ENCODE measurements at regions of chr9 and their contacts with region 1.

Region 1: DNA sequence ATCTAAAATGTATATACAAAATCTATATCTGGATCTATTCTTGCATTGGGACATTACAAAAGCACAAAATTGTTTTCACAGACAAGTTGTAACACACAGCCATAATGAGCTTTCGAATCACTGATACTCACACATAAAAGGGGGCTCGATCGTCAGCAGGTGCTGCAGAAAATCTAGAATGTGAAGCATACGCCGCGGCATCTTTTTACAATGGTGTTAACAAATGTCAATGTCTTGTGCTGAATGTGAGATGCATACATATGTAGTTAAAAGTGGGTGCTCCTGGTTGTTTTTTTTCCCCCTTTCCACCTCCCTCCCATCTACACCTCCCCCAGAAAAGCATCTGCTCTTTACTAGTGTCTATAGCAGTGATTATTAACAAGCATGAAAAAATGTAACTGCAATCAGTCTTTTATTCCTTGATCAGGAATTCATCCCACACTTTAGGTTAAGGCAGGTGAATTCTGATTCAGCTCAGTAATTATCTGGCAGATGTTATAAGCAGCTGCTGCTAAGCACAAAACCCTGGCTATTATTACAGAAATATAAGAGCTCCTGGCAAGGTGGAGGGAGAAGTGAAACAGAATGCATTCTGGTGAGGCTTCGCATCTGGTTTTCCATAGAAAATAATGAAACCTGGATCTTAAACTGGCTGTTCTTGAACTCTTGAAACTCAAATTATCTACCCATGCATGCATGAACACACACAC is 114.1 kb downstream of the MPDZ start:
- DNase-seq: no peak
- H3K4me3 Mint-ChIP-seq: no peak overlapping the region
- H3K27ac Mint-ChIP-seq: no peak overlapping the region
- H3K4me1 Mint-ChIP-seq: no peaks in the 10 kb centered on the region
- H3K27me3 Mint-ChIP-seq: no peaks in the 10 kb centered on the region

Region 2: GRCh38 chr9:13110766-13111417 is 54.5 kb before region 1 on chr9:
- CTCF ChIA-PET with region 1: no interaction called
- intact Hi-C with region 1: no loop called
- DNase-seq: no peak
- H3K4me3 Mint-ChIP-seq: no peak overlapping the region
- H3K27ac Mint-ChIP-seq: no peak overlapping the region
- H3K4me1 Mint-ChIP-seq: no peaks in the 10 kb centered on the region
- H3K27me3 Mint-ChIP-seq: no peaks in the 10 kb centered on the region

Region 3: GRCh38 chr9:13137426-13137825 is 28.0 kb before region 1 on chr9:
- CTCF ChIA-PET with region 1: no interaction called
- intact Hi-C with region 1: no loop called
- DNase-seq: no peak
- H3K4me3 Mint-ChIP-seq: no peak overlapping the region
- H3K27ac Mint-ChIP-seq: no peak overlapping the region
- H3K4me1 Mint-ChIP-seq: no peaks in the 10 kb centered on the region
- H3K27me3 Mint-ChIP-seq: no peaks in the 10 kb centered on the region

Region 4: DNA sequence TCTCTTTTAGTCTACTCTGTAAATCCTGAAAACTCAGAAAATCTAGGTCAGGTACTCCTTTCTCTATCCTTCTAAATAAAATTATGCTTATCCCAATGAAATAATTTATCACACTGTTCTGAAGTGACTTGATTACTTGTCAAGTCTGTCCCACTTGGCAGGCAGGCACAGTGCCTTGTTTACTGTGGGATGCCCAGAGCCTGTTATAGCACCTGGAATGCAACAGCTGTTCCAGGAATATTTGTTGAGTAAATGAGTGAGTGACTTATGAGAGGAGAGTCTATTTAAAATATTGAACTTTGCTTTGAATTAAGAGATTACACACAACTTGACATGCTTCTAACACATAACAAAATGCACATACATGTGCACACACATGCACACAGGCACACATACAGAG is 15.9 kb before region 1 on chr9:
- CTCF ChIA-PET with region 1: no interaction called
- intact Hi-C with region 1: loop called (anchors 2 kb)
- DNase-seq: no peak
- H3K4me3 Mint-ChIP-seq: no peak overlapping the region
- H3K27ac Mint-ChIP-seq: no peak overlapping the region
- H3K4me1 Mint-ChIP-seq: no peaks in the 10 kb centered on the region
- H3K27me3 Mint-ChIP-seq: no peaks in the 10 kb centered on the region

Measured in activated naive CD4-positive, alpha-beta T cell treated with anti-CD3 and anti-CD28 coated beads for 36 hours (primary cell).